B cell (primary cell): ENCODE measurements at regions of chr2 and their contacts with region 1.

Region 1: GRCh38 chr2:98649135-98649991 is 41.0 kb downstream of the UNC50 start:
- DNase-seq: peak; percentile 85
- ATAC-seq: peak; percentile 99
- H3K4me3 ChIP-seq: no peak overlapping the region
- H3K4me3 Mint-ChIP-seq: no peak overlapping the region
- H3K27ac ChIP-seq: no peak overlapping the region
- H3K27ac Mint-ChIP-seq: no peak overlapping the region
- H3K4me1 ChIP-seq: no peaks in the 10 kb centered on the region
- H3K4me1 Mint-ChIP-seq: peaks cover 24% of the 10 kb centered on the region
- H3K27me3 ChIP-seq: no peaks in the 10 kb centered on the region
- H3K27me3 Mint-ChIP-seq: no peaks in the 10 kb centered on the region
- CTCF ChIP-seq: peak; percentile 98

Region 2: DNA sequence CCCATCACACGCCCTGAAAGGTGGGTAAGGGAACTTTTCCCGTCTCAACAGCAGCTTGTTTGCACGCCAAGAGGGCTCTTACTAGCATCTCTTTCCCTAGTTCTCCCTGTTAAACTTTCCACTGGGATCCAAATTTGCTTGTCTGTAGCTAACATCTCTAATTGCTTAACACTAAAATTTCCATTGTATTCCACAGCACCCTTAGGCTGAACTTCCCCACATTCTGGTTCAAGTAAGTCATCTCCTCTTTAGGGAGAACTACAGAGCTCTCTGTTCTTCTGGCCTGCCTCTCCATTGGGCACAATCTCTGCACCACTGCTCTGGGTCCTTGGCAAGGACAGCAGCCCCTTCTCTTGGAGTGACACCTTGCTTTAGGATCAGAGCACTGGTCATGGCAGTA is 17.0 kb before region 1 on chr2:
- CTCF ChIA-PET with region 1: interaction called, 26 read pairs
- POLR2A ChIA-PET with region 1: no interaction called
- intact Hi-C with region 1: no loop called
- DNase-seq: no peak
- ATAC-seq: no peak
- H3K4me3 ChIP-seq: no peak overlapping the region
- H3K4me3 Mint-ChIP-seq: no peak overlapping the region
- H3K27ac ChIP-seq: no peak overlapping the region
- H3K27ac Mint-ChIP-seq: no peak overlapping the region
- H3K4me1 ChIP-seq: peaks cover 0 to under 1% of the 10 kb centered on the region in 2 donors
- H3K4me1 Mint-ChIP-seq: peaks cover 2% of the 10 kb centered on the region
- H3K27me3 ChIP-seq: no peaks in the 10 kb centered on the region
- H3K27me3 Mint-ChIP-seq: no peaks in the 10 kb centered on the region
- CTCF ChIP-seq: no peak

Region 3: GRCh38 chr2:98731041-98731893 is 81.9 kb after region 1 on chr2 and contains the start of gene MGAT4A:
- CTCF ChIA-PET with region 1: interaction called, 12 read pairs
- POLR2A ChIA-PET with region 1: no interaction called
- intact Hi-C with region 1: loop called (anchors 2 kb)
- DNase-seq: peak; percentile 85
- ATAC-seq: peak; percentile 86
- H3K4me3 ChIP-seq: peak within 1 kb of the TSS; percentile 48 to 94 (median 63)
- H3K4me3 Mint-ChIP-seq: peak within 1 kb of the TSS; percentile 93
- H3K27ac ChIP-seq: peak within 1 kb of the TSS; percentile 44 to 75
- H3K27ac Mint-ChIP-seq: peak within 1 kb of the TSS; percentile 91
- H3K4me1 ChIP-seq: peaks cover 27 to 42% of the 10 kb centered on the region in 2 donors
- H3K4me1 Mint-ChIP-seq: peaks cover 53% of the 10 kb centered on the region
- H3K27me3 ChIP-seq: no peaks in the 10 kb centered on the region
- H3K27me3 Mint-ChIP-seq: no peaks in the 10 kb centered on the region
- CTCF ChIP-seq: no peak
- total RNA-seq, gene MGAT4A: 28.9 and 32.7 TPM in 2 replicates

Region 4: GRCh38 chr2:98822301-98823164 is 173.2 kb after region 1 on chr2:
- CTCF ChIA-PET with region 1: interaction called, 18 read pairs
- POLR2A ChIA-PET with region 1: no interaction called
- intact Hi-C with region 1: no loop called
- DNase-seq: peak; percentile 66
- ATAC-seq: peak; percentile 83
- H3K4me3 ChIP-seq: peak overlapping the region in 3 of 5 experiments; percentile 39 to 59 (median 54)
- H3K4me3 Mint-ChIP-seq: peak overlapping the region; percentile 50
- H3K27ac ChIP-seq: no peak overlapping the region
- H3K27ac Mint-ChIP-seq: no peak overlapping the region
- H3K4me1 ChIP-seq: peaks cover 4 to 16% of the 10 kb centered on the region in 2 donors
- H3K4me1 Mint-ChIP-seq: peaks cover 18% of the 10 kb centered on the region
- H3K27me3 ChIP-seq: peaks cover 0 to 20% (median 10%) of the 10 kb centered on the region in 4 experiments
- H3K27me3 Mint-ChIP-seq: peaks cover 5% of the 10 kb centered on the region
- CTCF ChIP-seq: peak; percentile 39

Region 5: DNA sequence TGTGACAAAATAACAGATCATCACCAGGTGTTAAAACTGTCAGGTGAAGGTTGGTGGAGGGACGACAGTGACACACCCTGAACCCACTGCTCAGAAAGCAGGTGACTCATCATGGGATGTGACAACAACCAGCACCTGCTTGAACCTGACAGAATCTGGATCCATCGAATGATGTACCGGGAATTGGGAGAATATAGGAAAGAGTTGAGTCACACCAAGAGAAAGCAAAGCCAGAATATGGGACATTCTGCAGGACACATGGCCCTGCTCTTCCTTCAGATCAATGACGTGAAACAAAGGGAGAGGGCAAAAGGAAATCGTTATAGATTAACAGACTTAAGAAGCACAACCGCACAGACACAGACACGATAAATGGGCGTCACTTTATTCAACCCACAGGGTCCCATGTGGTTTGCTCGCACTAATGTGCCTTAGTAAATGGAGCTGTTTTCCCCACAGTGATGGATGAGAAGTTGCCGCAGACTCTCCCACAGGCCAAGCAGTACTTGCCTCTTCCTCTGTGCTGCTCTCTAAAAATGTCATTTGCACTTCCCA is 186.5 kb after region 1 on chr2:
- CTCF ChIA-PET with region 1: interaction called, 124 read pairs
- POLR2A ChIA-PET with region 1: no interaction called
- intact Hi-C with region 1: loop called (anchors 1 kb)
- DNase-seq: no peak
- ATAC-seq: no peak
- H3K4me3 ChIP-seq: no peak overlapping the region
- H3K4me3 Mint-ChIP-seq: no peak overlapping the region
- H3K27ac ChIP-seq: no peak overlapping the region
- H3K27ac Mint-ChIP-seq: no peak overlapping the region
- H3K4me1 ChIP-seq: peaks cover 0 to 3% of the 10 kb centered on the region in 2 donors
- H3K4me1 Mint-ChIP-seq: peaks cover 7% of the 10 kb centered on the region
- H3K27me3 ChIP-seq: no peaks in the 10 kb centered on the region
- H3K27me3 Mint-ChIP-seq: no peaks in the 10 kb centered on the region
- CTCF ChIP-seq: no peak

Region 6: DNA sequence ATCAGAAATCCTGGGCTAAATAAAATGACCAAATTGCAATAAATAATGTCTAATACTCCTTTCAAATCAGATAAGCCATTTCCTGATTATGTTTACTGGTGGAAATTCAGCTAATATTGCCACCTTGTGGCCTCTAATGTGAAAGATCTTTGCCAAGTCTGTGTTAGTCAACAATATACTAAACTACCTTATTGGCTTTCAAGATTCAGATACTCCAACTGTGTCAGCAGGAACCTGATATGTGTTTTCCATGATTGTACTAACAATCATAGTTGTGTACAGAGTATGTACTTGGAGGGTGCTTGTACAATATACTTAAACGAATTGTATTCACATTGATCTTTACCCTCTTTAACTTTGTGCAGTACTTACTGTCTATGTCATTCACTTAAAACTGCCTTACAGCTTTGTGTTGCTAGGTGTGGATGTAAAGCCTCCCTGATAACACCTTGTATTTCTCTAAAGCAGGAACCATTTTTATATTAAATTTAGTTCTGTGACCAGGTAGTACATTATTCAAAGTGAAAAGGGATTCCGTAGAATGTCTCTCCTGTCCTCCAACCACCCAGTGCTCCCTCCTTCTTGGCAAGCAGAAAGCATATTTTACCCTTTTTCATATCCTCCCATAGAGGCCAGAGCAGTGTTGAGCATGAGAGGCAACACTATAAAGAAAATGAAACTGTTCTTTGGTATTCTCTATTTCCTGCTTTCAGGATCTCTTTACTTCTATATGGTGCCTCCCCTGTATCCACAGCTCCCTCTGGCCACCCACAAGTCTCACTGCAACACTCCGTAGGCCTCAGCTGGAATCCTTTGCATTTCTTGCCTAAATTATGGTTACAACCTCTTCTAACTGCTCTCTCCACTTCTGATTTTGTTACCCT is 417.0 kb after region 1 on chr2:
- CTCF ChIA-PET with region 1: interaction called, 32 read pairs
- POLR2A ChIA-PET with region 1: no interaction called
- intact Hi-C with region 1: loop called (anchors 1 kb)
- DNase-seq: peak; percentile 62
- ATAC-seq: peak; percentile 78
- H3K4me3 ChIP-seq: peak overlapping the region in 1 of 5 experiments; percentile 20
- H3K4me3 Mint-ChIP-seq: no peak overlapping the region
- H3K27ac ChIP-seq: peak overlapping the region in 1 of 2 donors; percentile 52
- H3K27ac Mint-ChIP-seq: no peak overlapping the region
- H3K4me1 ChIP-seq: peaks cover 9 to 10% of the 10 kb centered on the region in 2 donors
- H3K4me1 Mint-ChIP-seq: no peaks in the 10 kb centered on the region
- H3K27me3 ChIP-seq: no peaks in the 10 kb centered on the region
- H3K27me3 Mint-ChIP-seq: no peaks in the 10 kb centered on the region
- CTCF ChIP-seq: peak; percentile 70